ENCODE measurements at regions of chr9 and their contacts with region 1.

Region 1: GRCh38 chr9:20622330-20623020 is at the start of gene MLLT3:
- DNase-seq: peak; percentile 97 to 98
- ATAC-seq: peak; percentile 95 to 98 (median 96)
- H3K4me3 ChIP-seq: peak within 1 kb of the TSS; percentile 71
- H3K27ac ChIP-seq: peak within 1 kb of the TSS; percentile 81
- H3K4me1 ChIP-seq: peaks cover 21% of the 10 kb centered on the region
- H3K27me3 ChIP-seq: no peaks in the 10 kb centered on the region
- CTCF ChIP-seq: peak; percentile 10
- total RNA-seq, gene MLLT3: 2.5 to 6.0 (median 3.2) TPM

Region 2: GRCh38 chr9:20356403-20357035 is 266.0 kb before region 1 on chr9:
- intact Hi-C with region 1: loop called (anchors 2 to 10 kb)
- DNase-seq: peak; percentile 33 to 73
- ATAC-seq: peak; percentile 77 to 88 (median 81)
- H3K4me3 ChIP-seq: peak overlapping the region; percentile 51
- H3K27ac ChIP-seq: peak overlapping the region; percentile 24
- H3K4me1 ChIP-seq: peaks cover 24% of the 10 kb centered on the region
- H3K27me3 ChIP-seq: no peaks in the 10 kb centered on the region
- CTCF ChIP-seq: peak; percentile 65

Region 3: DNA sequence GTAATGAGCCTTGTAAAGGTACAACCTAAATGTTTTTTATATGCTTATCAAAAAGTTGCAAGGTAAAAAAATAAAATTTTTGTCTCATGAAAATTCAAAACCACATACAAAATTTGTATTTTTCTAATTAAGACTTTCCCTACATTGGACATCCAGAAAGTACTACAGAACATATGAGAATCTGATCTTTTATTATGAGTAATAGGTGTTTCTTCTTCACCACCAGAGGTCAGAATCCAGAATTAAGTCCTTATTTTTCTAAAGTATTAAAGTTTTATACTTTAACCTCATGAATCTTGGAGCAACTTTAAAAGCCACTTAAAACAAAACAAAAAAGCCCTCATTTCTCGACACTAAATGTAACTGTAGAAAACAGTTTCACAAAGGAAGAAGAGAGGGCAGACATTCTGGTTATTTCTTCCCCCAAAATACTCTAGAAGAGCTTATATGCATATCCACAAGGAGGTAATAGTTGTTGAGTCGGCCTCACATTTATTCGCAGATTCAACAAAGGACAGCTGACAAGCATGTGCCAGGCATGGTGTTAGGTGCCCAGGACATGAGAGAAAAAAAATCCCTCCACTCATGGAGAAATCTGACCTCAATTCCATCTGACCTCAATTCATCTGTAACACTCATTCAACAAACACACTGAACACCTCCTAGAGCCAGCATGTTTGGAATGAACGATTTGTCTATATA is 69.5 kb before region 1 on chr9:
- intact Hi-C with region 1: loop called in 1 of 2 experiments (anchors 5 kb)
- DNase-seq: no peak
- ATAC-seq: peak in 3 of 4 donors; percentile 72 to 81 (median 81)
- H3K4me3 ChIP-seq: no peak overlapping the region
- H3K27ac ChIP-seq: no peak overlapping the region
- H3K4me1 ChIP-seq: peaks cover 5% of the 10 kb centered on the region
- H3K27me3 ChIP-seq: no peaks in the 10 kb centered on the region
- CTCF ChIP-seq: peak; percentile 30

Region 4: DNA sequence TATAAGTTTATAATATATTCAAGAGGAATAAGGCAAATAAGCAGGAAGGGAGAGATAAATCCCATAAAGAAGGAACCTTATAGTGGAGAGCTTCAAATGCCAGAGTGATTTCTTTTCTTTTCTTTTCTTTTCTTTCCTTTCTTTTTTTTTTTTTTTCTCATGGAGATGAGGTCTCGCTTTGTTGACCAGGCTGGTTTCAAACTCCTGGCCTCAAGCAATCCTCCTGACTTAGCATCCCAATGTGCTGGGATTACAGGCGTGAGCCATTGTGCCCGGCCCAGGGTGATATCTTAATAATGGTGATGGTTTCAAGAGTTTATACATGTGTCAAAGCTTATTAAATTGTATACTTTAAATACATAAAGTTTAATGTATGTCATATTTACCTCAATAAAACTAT is 42.0 kb after region 1 on chr9:
- intact Hi-C with region 1: no loop called
- DNase-seq: no peak
- ATAC-seq: no peak
- H3K4me3 ChIP-seq: no peak overlapping the region
- H3K27ac ChIP-seq: no peak overlapping the region
- H3K4me1 ChIP-seq: no peaks in the 10 kb centered on the region
- H3K27me3 ChIP-seq: no peaks in the 10 kb centered on the region
- CTCF ChIP-seq: no peak

Region 5: DNA sequence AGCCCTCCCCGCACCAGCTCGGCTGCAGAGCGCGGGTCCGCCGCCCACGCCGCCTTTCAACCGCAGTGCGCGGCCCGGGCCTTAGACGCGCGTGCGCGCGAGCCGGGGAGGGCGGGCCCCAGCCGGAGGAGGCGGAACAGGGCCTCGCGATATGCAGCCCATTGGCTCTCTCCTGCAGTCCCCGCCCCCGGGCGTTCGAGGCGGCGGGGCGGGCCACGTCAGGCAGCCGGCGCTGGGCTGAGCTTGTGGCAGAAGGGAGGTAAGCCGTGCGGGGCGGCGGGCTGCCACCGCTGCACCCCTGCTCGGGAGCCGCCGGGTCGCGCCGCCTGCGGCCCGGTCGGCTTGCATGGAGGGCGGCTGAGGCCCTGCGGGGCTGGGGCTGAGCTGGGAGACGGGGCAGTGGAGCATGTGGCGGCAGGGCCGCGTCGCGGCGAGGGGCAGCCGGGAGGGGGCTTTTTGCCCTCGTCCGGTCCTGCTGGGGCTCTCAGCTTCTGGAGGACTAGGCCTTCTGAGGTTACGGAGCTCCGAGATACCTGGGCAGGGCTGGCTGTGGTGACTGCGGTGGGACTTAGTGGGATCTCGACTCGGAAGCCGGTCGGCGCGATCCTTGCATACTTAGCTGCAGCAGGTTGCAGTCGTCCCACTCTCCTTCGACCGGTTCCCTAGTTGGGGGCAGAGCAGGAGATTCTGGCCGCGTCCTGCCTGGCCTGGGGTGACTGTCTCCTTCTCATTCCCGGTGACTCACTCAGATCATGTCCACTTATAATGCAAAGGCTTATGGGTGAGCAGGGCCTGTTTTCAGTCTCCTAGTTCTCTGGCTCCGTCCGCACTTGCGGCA is 61.8 kb after region 1 on chr9 and contains the start of gene FOCAD:
- intact Hi-C with region 1: loop called (anchors 2 kb)
- DNase-seq: peak; percentile 97 to 98
- ATAC-seq: peak; percentile 96 to 99 (median 98)
- H3K4me3 ChIP-seq: peak within 1 kb of the TSS; percentile 89
- H3K27ac ChIP-seq: peak within 1 kb of the TSS; percentile 96
- H3K4me1 ChIP-seq: peaks cover 13% of the 10 kb centered on the region
- H3K27me3 ChIP-seq: no peaks in the 10 kb centered on the region
- CTCF ChIP-seq: no peak
- total RNA-seq, gene FOCAD: 12.1 to 24.8 (median 16.6) TPM

Region 6: GRCh38 chr9:20701060-20701459 is 78.6 kb after region 1 on chr9:
- intact Hi-C with region 1: no loop called
- DNase-seq: no peak
- ATAC-seq: peak in 3 of 4 donors; percentile 49 to 75 (median 72)
- H3K4me3 ChIP-seq: peak overlapping the region; percentile 4
- H3K27ac ChIP-seq: peak overlapping the region; percentile 48
- H3K4me1 ChIP-seq: peaks cover 26% of the 10 kb centered on the region
- H3K27me3 ChIP-seq: no peaks in the 10 kb centered on the region
- CTCF ChIP-seq: no peak

Region 7: GRCh38 chr9:20941174-20941690 is 318.8 kb after region 1 on chr9:
- intact Hi-C with region 1: loop called (anchors 5 to 10 kb)
- DNase-seq: no peak
- ATAC-seq: peak; percentile 66 to 95 (median 90)
- H3K4me3 ChIP-seq: no peak overlapping the region
- H3K27ac ChIP-seq: no peak overlapping the region
- H3K4me1 ChIP-seq: no peaks in the 10 kb centered on the region
- H3K27me3 ChIP-seq: no peaks in the 10 kb centered on the region
- CTCF ChIP-seq: peak; percentile 85

Region 8: GRCh38 chr9:21110708-21111576 is 488.5 kb after region 1 on chr9:
- intact Hi-C with region 1: loop called in 1 of 2 experiments (anchors 10 kb)
- DNase-seq: no peak
- ATAC-seq: peak in 3 of 4 donors; percentile 66 to 86 (median 81)
- H3K4me3 ChIP-seq: no peak overlapping the region
- H3K27ac ChIP-seq: no peak overlapping the region
- H3K4me1 ChIP-seq: no peaks in the 10 kb centered on the region
- H3K27me3 ChIP-seq: no peaks in the 10 kb centered on the region
- CTCF ChIP-seq: peak; percentile 77

Measured in psoas muscle (tissue), 8 donors.